ENCODE measurements at regions of chr2 and their contacts with region 1.

Region 1: DNA sequence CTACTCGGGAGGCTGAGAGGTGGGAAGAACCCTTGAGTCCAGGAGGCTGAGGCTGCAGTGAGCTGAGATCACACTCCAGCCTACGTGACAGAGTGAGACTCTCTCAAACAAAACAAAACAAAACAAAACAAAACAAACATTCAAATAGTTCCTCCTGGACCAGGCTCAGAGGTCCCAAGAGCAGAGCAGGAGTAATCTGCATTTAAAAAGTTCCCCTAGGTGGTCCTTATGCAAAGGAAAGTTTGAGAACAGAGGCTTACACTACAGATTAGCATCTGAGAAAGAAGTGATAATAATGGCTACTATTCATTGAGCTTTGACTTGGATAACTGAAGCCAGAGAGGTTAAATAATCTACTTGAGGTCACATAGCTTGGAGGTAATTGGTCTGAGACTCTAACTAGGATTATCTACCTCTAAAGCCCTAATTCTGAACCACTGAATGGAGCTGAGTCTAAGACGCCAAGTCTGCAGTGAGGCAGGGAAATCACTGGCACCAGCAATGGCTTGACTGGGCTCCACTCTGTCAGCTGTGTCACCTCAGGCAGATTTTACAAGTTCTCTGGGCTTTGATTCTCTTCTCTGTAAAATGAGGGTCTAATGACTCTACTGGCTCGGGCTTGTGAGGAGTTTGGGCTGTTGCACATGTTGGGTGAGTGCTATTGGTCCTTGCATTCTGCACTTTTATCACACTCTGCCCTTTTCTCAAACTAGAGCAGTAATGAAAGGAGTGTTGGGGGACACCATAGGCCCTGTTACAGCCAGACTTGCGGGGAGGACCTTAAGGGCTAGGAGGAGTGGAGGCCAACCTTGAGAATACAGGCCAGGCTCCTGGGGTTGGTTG is 29.2 kb upstream of the DLX2 start:
- H3K4me3 Mint-ChIP-seq: no peak overlapping the region
- H3K27ac Mint-ChIP-seq: no peak overlapping the region
- H3K4me1 Mint-ChIP-seq: no peaks in the 10 kb centered on the region
- H3K27me3 Mint-ChIP-seq: no peaks in the 10 kb centered on the region

Region 2: DNA sequence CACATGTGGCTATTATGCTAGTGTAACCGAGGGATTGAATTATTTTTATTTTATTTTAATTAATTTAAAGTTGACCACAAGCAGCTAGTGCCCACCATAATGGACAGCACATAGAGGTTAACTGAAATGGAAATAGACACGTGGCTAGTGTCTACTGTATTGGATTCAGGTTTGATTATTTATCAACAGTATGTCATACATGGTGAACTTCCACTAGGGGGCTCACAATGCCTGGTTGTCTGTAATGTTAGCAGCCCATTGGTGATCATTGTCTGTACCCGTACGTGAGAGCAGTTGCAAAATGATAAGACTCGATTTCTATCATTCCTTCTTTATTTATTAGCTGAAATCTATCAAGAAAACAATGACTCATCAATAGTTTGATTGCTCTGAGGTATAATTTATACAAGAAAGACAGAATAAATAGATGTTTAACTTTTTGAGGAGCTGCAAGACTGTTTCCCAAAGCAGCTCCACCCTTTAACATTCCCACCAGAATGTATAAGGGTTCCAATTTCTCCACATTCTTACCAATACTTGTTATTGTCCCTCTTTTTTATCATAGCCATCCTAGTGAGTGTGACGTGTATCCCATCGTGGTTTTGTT is 533.1 kb before region 1 on chr2:
- intact Hi-C with region 1: loop called (anchors 1 kb)
- H3K4me3 Mint-ChIP-seq: no peak overlapping the region
- H3K27ac Mint-ChIP-seq: no peak overlapping the region
- H3K4me1 Mint-ChIP-seq: peaks cover 5% of the 10 kb centered on the region
- H3K27me3 Mint-ChIP-seq: peaks cover 9% of the 10 kb centered on the region

Region 3: DNA sequence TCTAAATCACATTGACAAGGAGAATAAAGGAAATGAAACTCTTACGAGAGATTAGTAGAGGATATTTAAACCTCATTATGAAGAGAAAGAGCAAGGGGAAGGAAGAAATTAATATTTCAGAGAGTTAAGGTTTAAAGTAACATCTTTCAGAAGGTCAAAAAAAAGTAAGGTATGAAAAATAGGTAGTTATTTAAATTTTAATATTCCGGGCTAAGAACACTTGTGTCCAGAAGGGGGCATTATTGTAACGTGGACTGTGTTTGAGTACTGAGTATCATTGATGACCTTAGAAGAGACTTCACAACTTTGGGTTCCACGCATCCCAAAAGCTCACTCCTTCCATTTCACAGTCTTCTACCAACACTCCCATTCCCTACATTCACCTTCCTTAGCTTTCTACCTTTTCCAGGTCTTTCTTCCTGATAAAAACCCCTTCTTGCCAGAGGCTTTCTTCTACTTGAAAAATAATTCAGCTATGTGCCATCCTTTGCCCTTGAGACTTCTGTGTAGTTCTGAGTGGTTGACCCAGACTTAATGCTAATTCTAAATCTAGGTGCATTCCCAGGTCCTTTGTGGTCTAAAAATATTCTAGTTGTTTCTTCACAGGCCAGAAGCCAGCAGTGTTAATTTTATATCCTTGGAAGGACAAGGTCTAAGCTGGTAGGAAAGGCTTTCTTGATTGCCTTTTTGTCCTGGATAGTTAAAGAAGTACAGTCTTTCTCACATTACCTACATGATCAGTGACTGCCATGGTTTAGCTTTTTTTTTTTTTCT is 428.2 kb before region 1 on chr2:
- intact Hi-C with region 1: loop called (anchors 5 kb)
- H3K4me3 Mint-ChIP-seq: no peak overlapping the region
- H3K27ac Mint-ChIP-seq: no peak overlapping the region
- H3K4me1 Mint-ChIP-seq: peaks cover 9% of the 10 kb centered on the region
- H3K27me3 Mint-ChIP-seq: no peaks in the 10 kb centered on the region

Region 4: GRCh38 chr2:171811245-171811628 is 320.7 kb before region 1 on chr2:
- intact Hi-C with region 1: loop called (anchors 2 kb)
- H3K4me3 Mint-ChIP-seq: no peak overlapping the region
- H3K27ac Mint-ChIP-seq: no peak overlapping the region
- H3K4me1 Mint-ChIP-seq: no peaks in the 10 kb centered on the region
- H3K27me3 Mint-ChIP-seq: no peaks in the 10 kb centered on the region